Colonic mucosa (tissue), 4 donors: ENCODE measurements at regions of chr2 and their contacts with region 1.

Region 1: GRCh38 chr2:27086090-27086723 is 365 bp upstream of the KHK start:
- DNase-seq: peak; percentile 96
- H3K4me3 ChIP-seq: peak overlapping the region; percentile 75
- H3K27ac ChIP-seq: peak overlapping the region; percentile 91
- H3K4me1 ChIP-seq: peaks cover 15% of the 10 kb centered on the region
- H3K27me3 ChIP-seq: no peaks in the 10 kb centered on the region
- CTCF ChIP-seq: peak; percentile 84

Region 2: DNA sequence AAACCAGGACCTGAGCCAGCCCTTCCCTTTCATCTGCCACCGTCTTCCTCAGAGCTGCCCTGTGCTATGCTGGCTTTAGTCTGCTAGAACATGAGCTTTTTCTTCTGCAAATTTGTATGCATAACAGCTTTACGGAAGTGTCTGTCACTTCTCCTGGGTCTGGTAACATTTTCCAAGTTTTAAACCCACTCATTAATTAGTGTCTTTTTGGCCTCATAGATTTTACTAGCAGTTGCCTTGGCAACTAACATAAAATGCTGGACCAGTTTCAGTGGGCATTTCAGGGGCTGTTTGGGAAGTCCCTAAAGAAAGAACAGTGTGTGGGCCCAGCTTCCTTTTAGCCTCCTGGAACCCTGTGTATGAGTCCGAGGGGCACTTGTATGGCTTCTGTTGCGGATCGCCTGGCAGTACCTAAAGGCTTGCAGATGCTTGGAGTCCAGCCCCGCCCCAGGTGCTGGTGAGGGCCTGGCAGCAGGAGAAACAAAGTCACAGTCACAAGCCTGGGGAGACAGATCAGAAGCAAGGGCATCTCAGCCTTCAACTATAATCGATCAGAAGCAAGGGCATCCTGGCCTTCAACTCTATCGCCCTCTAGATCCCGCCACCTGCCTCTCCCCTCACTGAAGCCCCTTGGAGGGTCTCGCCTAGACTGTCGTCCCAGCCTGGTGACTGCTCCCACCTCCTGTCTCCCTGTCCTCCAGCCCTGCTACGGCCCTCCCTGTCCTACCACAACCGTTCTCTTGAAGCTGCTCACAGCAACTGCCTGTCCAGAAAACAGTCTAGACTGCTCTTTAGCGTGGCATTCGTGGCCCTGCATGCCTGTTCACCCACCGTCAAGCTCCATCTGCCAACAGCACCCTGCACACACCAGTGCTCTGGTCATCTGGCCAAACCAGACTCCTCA is 152.5 kb before region 1 on chr2:
- intact Hi-C with region 1: no loop called
- DNase-seq: no peak
- H3K4me3 ChIP-seq: no peak overlapping the region
- H3K27ac ChIP-seq: no peak overlapping the region
- H3K4me1 ChIP-seq: no peaks in the 10 kb centered on the region
- H3K27me3 ChIP-seq: no peaks in the 10 kb centered on the region
- CTCF ChIP-seq: no peak

Region 3: DNA sequence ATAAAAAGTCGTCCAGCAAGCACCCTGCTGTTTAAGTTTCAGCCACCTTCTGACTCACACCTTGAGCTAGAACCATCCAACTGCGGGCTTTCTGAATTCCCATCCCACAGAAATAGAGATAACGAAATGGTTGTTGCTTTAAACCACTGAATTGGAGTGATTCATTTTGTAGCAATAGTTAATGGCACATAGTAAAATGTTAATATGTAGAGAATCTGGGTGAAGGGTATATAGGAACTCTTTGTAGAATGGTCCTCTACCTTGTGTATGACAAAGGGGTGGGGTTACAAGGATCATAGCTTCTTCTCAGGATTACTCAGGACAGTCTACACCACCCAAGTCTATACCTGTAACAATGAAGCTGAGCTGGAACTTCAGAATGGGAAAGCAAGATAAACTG is 118.2 kb before region 1 on chr2:
- intact Hi-C with region 1: loop called (anchors 2 kb)
- DNase-seq: peak; percentile 39
- H3K4me3 ChIP-seq: no peak overlapping the region
- H3K27ac ChIP-seq: peak overlapping the region; percentile 73
- H3K4me1 ChIP-seq: no peaks in the 10 kb centered on the region
- H3K27me3 ChIP-seq: no peaks in the 10 kb centered on the region
- CTCF ChIP-seq: no peak

Region 4: DNA sequence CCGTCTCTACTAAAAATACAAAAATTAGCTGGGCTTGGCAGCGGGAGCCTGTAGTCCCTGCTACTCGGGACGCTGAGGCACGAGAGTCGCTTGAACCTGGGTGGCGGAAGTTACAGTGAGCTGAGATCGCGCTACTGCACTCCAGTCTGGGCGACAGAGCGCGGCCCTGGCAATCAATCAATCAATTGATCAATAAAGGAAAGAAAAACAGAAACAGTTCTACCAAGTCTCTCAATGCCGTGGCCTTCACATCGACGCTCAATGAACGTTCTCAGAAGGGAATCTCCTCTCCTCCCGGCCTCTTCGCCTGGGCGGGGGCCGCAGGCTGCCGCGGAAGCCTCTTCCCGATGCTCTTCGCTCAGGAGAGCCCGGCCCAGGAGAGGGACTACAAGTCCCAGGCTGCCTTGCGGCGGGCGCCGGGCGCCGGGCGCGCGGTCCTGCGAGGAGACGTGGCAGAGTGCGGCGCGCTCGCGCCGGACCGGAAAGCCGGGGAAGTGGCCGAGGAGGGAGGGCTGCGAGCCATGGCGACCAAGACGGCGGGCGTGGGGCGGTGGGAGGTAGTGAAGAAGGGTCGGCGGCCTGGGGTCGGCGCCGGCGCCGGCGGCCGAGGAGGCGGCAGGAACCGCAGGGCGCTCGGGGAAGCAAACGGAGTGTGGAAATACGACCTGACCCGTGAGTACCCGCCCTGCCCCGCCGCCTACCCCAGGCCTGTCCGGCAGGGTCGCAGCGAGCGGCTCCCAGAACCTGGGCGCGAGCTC is 53.5 kb before region 1 on chr2 and contains the start of gene TMEM214:
- intact Hi-C with region 1: loop called (anchors 10 kb)
- DNase-seq: peak; percentile 90
- H3K4me3 ChIP-seq: peak within 1 kb of the TSS; percentile 76
- H3K27ac ChIP-seq: peak within 1 kb of the TSS; percentile 59
- H3K4me1 ChIP-seq: peaks cover 13% of the 10 kb centered on the region
- H3K27me3 ChIP-seq: no peaks in the 10 kb centered on the region
- CTCF ChIP-seq: no peak
- total RNA-seq, gene TMEM214: 76.6 to 121 TPM